CD8-positive, alpha-beta T cell (primary cell): ENCODE measurements at regions of chr17 and their contacts with region 1.

Region 1: DNA sequence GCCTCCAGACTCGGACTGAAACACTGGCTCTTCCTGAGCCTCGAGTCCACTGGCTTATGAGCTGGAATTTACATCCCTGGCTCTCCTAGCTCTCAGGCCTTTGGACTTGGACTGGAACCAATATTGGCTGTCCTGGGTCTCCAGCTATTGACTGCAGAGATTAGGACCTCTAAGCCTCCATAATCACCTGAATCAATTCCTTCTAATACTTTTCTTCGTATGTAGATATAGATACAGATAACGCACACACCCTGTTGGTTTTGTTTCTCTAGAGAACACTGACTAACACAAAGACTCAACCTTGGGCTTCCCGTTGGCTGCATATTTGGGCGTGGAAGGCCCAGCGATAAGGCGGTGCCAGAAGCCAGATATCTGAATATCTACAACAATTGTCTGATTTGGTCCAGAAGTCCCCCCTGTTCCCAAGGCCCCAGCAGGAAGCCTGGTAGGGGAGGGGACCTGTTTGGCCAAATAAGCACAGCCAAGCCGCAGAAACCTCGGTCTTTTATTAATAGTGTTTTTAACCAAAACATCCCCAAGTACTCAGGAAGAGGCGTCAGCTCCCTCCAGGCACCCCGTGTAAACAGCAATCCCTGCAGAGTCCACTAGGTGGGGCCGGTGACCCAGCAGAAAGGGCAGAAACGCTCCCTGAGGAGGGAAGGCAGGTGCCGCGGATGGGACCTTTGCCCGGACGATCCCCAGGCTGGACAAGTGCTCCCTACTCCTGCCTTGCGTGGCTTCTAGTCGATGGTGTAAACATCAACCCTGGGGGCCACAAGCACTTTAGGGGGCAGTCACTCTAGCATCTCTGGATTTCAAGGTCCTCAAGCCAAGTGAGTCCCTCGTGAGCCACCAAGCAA is 57.0 kb downstream of the ABR start:
- DNase-seq: peak; percentile 69 to 91 (median 83)
- ATAC-seq: peak; percentile 95
- H3K4me3 ChIP-seq: no peak overlapping the region
- H3K4me3 Mint-ChIP-seq: no peak overlapping the region
- H3K27ac ChIP-seq: no peak overlapping the region
- H3K27ac Mint-ChIP-seq: no peak overlapping the region
- H3K4me1 ChIP-seq: peaks cover 12% of the 10 kb centered on the region
- H3K4me1 Mint-ChIP-seq: peaks cover 7% of the 10 kb centered on the region
- H3K27me3 ChIP-seq: no peaks in the 10 kb centered on the region
- H3K27me3 Mint-ChIP-seq: no peaks in the 10 kb centered on the region
- CTCF ChIP-seq: peak; percentile 96

Region 2: DNA sequence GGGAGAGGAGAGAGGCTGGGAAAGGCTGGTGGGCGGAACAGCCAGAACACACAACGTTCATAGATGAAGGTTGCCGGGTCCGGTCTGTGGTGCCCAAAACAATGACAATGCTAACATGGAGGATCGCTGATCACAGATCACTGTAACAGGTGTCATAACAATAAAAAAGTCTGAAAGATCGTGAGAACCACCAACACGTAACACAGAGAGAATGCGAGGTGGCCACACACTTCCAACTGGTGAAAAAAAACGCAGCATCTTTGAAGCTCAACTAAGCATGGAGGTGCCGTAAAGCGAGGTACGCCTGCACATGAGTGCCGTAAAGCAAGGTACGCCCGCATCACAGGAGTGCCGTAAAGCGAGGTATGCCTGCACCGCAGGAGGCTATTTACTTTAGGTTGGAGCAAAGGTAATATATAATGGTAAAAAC is 14.7 kb after region 1 on chr17:
- CTCF ChIA-PET with region 1: interaction called, 10 read pairs
- POLR2A ChIA-PET with region 1: no interaction called
- intact Hi-C with region 1: no loop called
- DNase-seq: peak in 3 of 9 experiments; percentile 40 to 65 (median 54)
- ATAC-seq: peak; percentile 65
- H3K4me3 ChIP-seq: no peak overlapping the region
- H3K4me3 Mint-ChIP-seq: peak overlapping the region; percentile 6
- H3K27ac ChIP-seq: no peak overlapping the region
- H3K27ac Mint-ChIP-seq: peak overlapping the region; percentile 38
- H3K4me1 ChIP-seq: no peaks in the 10 kb centered on the region
- H3K4me1 Mint-ChIP-seq: no peaks in the 10 kb centered on the region
- H3K27me3 ChIP-seq: no peaks in the 10 kb centered on the region
- H3K27me3 Mint-ChIP-seq: no peaks in the 10 kb centered on the region
- CTCF ChIP-seq: no peak

Region 3: GRCh38 chr17:1260086-1260769 is 137.5 kb after region 1 on chr17:
- CTCF ChIA-PET with region 1: interaction called, 7 read pairs
- POLR2A ChIA-PET with region 1: no interaction called
- intact Hi-C with region 1: loop called (anchors 5 kb)
- DNase-seq: no peak
- ATAC-seq: no peak
- H3K4me3 ChIP-seq: peak overlapping the region in 1 of 2 experiments; percentile 49
- H3K4me3 Mint-ChIP-seq: peak overlapping the region; percentile 49
- H3K27ac ChIP-seq: no peak overlapping the region
- H3K27ac Mint-ChIP-seq: no peak overlapping the region
- H3K4me1 ChIP-seq: peaks cover 24% of the 10 kb centered on the region
- H3K4me1 Mint-ChIP-seq: peaks cover 31% of the 10 kb centered on the region
- H3K27me3 ChIP-seq: peaks cover 0 to 6% of the 10 kb centered on the region in 2 experiments
- H3K27me3 Mint-ChIP-seq: peaks cover 18% of the 10 kb centered on the region
- CTCF ChIP-seq: no peak

Region 4: GRCh38 chr17:1275962-1276736 is 153.4 kb after region 1 on chr17:
- CTCF ChIA-PET with region 1: interaction called, 6 read pairs
- POLR2A ChIA-PET with region 1: no interaction called
- intact Hi-C with region 1: loop called in 1 of 2 experiments (anchors 5 kb)
- DNase-seq: peak; percentile 49 to 84 (median 79)
- ATAC-seq: peak; percentile 90
- H3K4me3 ChIP-seq: no peak overlapping the region
- H3K4me3 Mint-ChIP-seq: no peak overlapping the region
- H3K27ac ChIP-seq: no peak overlapping the region
- H3K27ac Mint-ChIP-seq: no peak overlapping the region
- H3K4me1 ChIP-seq: no peaks in the 10 kb centered on the region
- H3K4me1 Mint-ChIP-seq: peaks cover 8% of the 10 kb centered on the region
- H3K27me3 ChIP-seq: no peaks in the 10 kb centered on the region
- H3K27me3 Mint-ChIP-seq: peaks cover 32% of the 10 kb centered on the region
- CTCF ChIP-seq: peak; percentile 88

Region 5: DNA sequence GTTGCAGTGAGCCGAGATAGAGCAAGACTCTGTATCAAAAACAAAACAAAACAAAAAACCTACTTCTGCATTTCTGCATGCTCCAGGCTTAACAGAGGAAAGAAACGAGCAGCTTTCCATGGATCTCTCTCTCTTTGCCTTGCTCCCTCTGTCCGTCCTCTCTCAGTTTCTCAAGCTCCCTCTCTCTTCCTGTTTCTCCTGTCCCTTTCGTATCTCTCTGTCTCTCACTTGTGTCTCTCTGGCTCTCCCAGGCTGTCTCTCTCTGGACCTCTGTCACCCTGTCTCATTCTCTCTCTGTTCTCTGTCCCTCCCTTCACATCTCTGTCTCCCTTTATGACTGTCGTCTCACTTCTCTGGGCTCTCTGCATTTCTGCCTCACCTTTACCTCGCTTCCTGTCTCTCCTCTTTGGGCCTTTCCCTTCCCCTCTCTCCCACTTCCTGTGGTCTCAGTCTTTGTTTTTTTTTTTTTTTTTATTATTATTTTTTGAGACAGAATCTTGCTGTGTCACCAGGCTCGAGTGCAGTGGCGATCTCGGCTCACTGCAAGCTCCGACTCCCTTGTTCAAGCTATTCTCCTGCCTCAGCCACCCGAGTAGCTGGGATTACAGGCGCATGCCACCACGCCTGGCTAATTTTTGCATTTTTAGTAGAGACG is 443.9 kb after region 1 on chr17:
- CTCF ChIA-PET with region 1: no interaction called
- POLR2A ChIA-PET with region 1: no interaction called
- intact Hi-C with region 1: no loop called
- DNase-seq: peak in 3 of 9 experiments; percentile 9 to 72 (median 56)
- ATAC-seq: no peak
- H3K4me3 ChIP-seq: peak overlapping the region; percentile 5 to 16
- H3K4me3 Mint-ChIP-seq: peak overlapping the region; percentile 63
- H3K27ac ChIP-seq: peak overlapping the region in 1 of 2 experiments; percentile 72
- H3K27ac Mint-ChIP-seq: peak overlapping the region; percentile 80
- H3K4me1 ChIP-seq: peaks cover 14% of the 10 kb centered on the region
- H3K4me1 Mint-ChIP-seq: peaks cover 25% of the 10 kb centered on the region
- H3K27me3 ChIP-seq: no peaks in the 10 kb centered on the region
- H3K27me3 Mint-ChIP-seq: no peaks in the 10 kb centered on the region
- CTCF ChIP-seq: no peak